SK-N-SH (cell line): ENCODE measurements at regions of chr6 and their contacts with region 1.

Region 1: GRCh38 chr6:104483225-104483834 is 376.4 kb downstream of the HACE1 start:
- DNase-seq: peak; percentile 37
- H3K4me3 ChIP-seq: no peak overlapping the region; a peak in 1 of 4 replicates
- H3K27ac ChIP-seq: no peak overlapping the region
- H3K4me1 ChIP-seq: no peaks in the 10 kb centered on the region; a peak in 2 of 4 replicates
- H3K27me3 ChIP-seq: no peaks in the 10 kb centered on the region; the same call in 1 of the 2 replicates
- CTCF ChIP-seq: peak; percentile 49
- EP300 ChIP-seq: no peak
- RAD21 ChIP-seq: peak; percentile 82

Region 2: DNA sequence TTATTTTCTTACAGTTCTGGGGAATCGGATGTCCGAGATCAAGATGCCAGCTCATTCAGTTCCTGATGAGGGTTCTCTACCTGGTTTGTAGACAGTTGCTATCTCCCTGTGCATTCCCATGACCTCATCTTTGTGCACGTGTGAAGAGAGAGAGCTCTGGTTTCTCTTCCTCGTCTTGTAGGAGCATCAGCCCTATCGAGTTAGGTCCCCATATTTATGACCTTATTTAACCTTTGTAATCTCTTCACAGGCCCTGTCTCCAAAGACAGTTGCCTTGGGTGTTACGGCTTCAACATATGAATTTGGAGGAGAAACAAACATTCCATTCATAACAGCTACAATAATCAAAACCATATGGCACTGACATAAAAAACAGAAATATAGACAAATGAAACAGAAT is 79.0 kb before region 1 on chr6:
- CTCF ChIA-PET with region 1: no interaction called
- POLR2A ChIA-PET with region 1: no interaction called
- DNase-seq: peak; percentile 12
- H3K4me3 ChIP-seq: no peak overlapping the region
- H3K27ac ChIP-seq: no peak overlapping the region
- H3K4me1 ChIP-seq: no peaks in the 10 kb centered on the region
- H3K27me3 ChIP-seq: no peaks in the 10 kb centered on the region
- CTCF ChIP-seq: no peak
- EP300 ChIP-seq: no peak
- RAD21 ChIP-seq: no peak

Region 3: DNA sequence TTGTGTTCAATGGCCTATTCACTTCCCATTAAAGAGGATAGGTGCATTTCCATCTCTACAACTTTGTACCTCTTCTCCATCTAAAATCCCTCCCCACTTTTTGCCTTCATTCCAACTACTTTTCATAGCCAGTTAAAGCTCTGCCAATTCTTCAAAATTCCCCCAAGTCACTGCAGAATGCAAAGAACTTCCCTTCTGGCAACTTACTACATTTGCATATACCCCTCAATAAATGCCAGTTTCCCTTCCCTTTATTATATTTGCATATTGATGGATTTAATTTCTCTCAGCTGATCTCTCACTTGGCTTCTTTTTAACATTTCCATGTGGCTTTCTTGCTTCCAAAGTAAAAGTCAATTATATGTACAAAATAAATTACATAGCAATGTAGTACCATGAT is 17.0 kb before region 1 on chr6:
- CTCF ChIA-PET with region 1: interaction called, 18 read pairs
- POLR2A ChIA-PET with region 1: no interaction called
- DNase-seq: no peak
- H3K4me3 ChIP-seq: no peak overlapping the region
- H3K27ac ChIP-seq: no peak overlapping the region
- H3K4me1 ChIP-seq: peaks cover 0 to 5% of the 10 kb centered on the region in 2 experiments; a peak in 2 of 4 replicates
- H3K27me3 ChIP-seq: no peaks in the 10 kb centered on the region
- CTCF ChIP-seq: no peak
- EP300 ChIP-seq: no peak
- RAD21 ChIP-seq: no peak

Region 4: DNA sequence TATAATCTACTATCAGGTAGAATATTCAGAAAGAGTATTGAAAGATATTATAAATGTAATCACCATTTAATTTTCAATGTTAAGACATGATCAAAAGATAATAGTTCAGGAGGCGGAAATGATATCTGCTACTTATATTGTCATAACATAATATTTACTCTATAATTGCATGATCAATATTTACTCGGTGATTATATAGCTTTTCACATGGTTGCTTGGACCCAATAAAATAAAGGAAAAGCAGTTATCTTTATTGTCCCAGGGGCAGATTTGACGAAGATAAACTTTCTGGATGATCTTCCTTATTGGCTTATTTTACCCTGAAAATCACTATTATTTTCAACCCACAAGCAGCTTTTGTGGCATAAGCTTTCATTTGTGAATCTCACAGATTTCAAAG is 26.0 kb after region 1 on chr6:
- CTCF ChIA-PET with region 1: interaction called, 11 read pairs
- POLR2A ChIA-PET with region 1: no interaction called
- DNase-seq: no peak
- H3K4me3 ChIP-seq: no peak overlapping the region
- H3K27ac ChIP-seq: no peak overlapping the region
- H3K4me1 ChIP-seq: peaks cover 0 to 3% of the 10 kb centered on the region in 2 experiments; a peak in 1 of 4 replicates
- H3K27me3 ChIP-seq: no peaks in the 10 kb centered on the region
- CTCF ChIP-seq: no peak
- EP300 ChIP-seq: no peak
- RAD21 ChIP-seq: no peak